ENCODE measurements at regions of chr9 and their contacts with region 1.

Region 1: GRCh38 chr9:123637945-123638634 is 282.1 kb downstream of the CRB2 start:
- DNase-seq: peak; percentile 75
- ATAC-seq: peak; percentile 89
- H3K4me3 ChIP-seq: no peak overlapping the region
- H3K27ac ChIP-seq: no peak overlapping the region
- H3K4me1 ChIP-seq: peaks cover 7% of the 10 kb centered on the region
- H3K27me3 ChIP-seq: no peaks in the 10 kb centered on the region
- CTCF ChIP-seq: no peak
- EP300 ChIP-seq: peak; percentile 65 to 79; a peak in 3 of 4 replicates
- POLR2A ChIP-seq: no peak
- RAD21 ChIP-seq: no peak

Region 2: GRCh38 chr9:123615381-123615780 is 22.7 kb before region 1 on chr9:
- CTCF ChIA-PET with region 1: interaction called, 5 read pairs
- POLR2A ChIA-PET with region 1: interaction called, 7 read pairs
- RAD21 ChIA-PET with region 1: interaction called, 4 read pairs
- SMC1A ChIA-PET with region 1: interaction called, 26 read pairs
- in situ Hi-C with region 1: no loop called
- intact Hi-C with region 1: no loop called
- DNase-seq: no peak
- ATAC-seq: peak; percentile 53
- H3K4me3 ChIP-seq: no peak overlapping the region
- H3K27ac ChIP-seq: no peak overlapping the region
- H3K4me1 ChIP-seq: 0 out of 2 replicates have a peak, but pooled peaks cover 7% of the 10 kb centered on the region
- H3K27me3 ChIP-seq: no peaks in the 10 kb centered on the region
- CTCF ChIP-seq: peak in 1 of 3 experiments; percentile 14; a peak in 1 of 6 replicates
- EP300 ChIP-seq: no peak
- POLR2A ChIP-seq: no peak
- RAD21 ChIP-seq: no peak

Region 3: GRCh38 chr9:123660691-123661466 is 22.8 kb after region 1 on chr9:
- CTCF ChIA-PET with region 1: interaction called, 3 read pairs
- POLR2A ChIA-PET with region 1: no interaction called
- RAD21 ChIA-PET with region 1: interaction called, 15 read pairs
- SMC1A ChIA-PET with region 1: interaction called, 19 read pairs
- in situ Hi-C with region 1: no loop called
- intact Hi-C with region 1: no loop called
- DNase-seq: no peak
- ATAC-seq: peak; percentile 60
- H3K4me3 ChIP-seq: no peak overlapping the region
- H3K27ac ChIP-seq: no peak overlapping the region
- H3K4me1 ChIP-seq: no peaks in the 10 kb centered on the region
- H3K27me3 ChIP-seq: no peaks in the 10 kb centered on the region
- CTCF ChIP-seq: no peak
- EP300 ChIP-seq: no peak
- POLR2A ChIP-seq: no peak
- RAD21 ChIP-seq: no peak

Region 4: GRCh38 chr9:123686131-123686828 is 48.2 kb after region 1 on chr9:
- CTCF ChIA-PET with region 1: interaction called, 3 read pairs
- POLR2A ChIA-PET with region 1: interaction called, 3 read pairs
- RAD21 ChIA-PET with region 1: interaction called, 22 read pairs
- SMC1A ChIA-PET with region 1: interaction called, 16 read pairs
- in situ Hi-C with region 1: no loop called
- intact Hi-C with region 1: no loop called
- DNase-seq: no peak
- ATAC-seq: peak; percentile 8; the same call in 1 of the 3 replicates
- H3K4me3 ChIP-seq: no peak overlapping the region
- H3K27ac ChIP-seq: no peak overlapping the region
- H3K4me1 ChIP-seq: peaks cover 33% of the 10 kb centered on the region
- H3K27me3 ChIP-seq: no peaks in the 10 kb centered on the region
- CTCF ChIP-seq: no peak
- EP300 ChIP-seq: no peak
- POLR2A ChIP-seq: no peak
- RAD21 ChIP-seq: no peak

Region 5: DNA sequence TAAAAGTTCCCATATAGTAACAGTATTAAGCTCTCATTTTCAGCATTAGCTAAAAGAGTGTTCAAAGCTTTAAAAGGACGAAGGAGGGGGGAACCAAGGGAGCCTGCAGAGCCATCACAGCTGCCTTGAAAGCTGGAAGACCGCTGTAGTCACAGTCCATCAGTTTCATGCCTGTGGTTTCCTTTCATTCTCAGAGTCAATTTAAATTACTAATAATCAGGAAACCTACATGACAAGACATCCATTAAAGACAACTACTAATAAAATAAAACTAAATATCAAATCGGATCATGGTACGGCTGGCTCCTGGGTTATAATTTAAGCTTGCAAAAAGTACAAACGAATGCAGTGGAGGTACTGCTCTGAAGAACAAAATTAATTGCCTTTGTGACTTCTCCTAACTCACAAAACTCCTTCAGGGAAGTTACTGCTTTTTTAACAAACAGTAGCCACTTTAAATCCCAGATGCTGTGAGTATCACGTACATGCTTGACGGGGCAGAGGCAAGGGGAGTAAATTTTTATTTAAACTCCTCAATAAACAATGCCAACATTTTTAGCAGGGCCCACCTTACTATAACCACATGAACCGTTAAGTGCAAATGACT is 78.4 kb after region 1 on chr9:
- CTCF ChIA-PET with region 1: interaction called, 5 read pairs
- POLR2A ChIA-PET with region 1: interaction called, 5 read pairs
- RAD21 ChIA-PET with region 1: interaction called, 8 read pairs
- SMC1A ChIA-PET with region 1: interaction called, 13 read pairs
- in situ Hi-C with region 1: no loop called
- intact Hi-C with region 1: no loop called
- DNase-seq: peak; percentile 43
- ATAC-seq: peak; percentile 89
- H3K4me3 ChIP-seq: no peak overlapping the region
- H3K27ac ChIP-seq: no peak overlapping the region
- H3K4me1 ChIP-seq: peaks cover 22% of the 10 kb centered on the region
- H3K27me3 ChIP-seq: no peaks in the 10 kb centered on the region
- CTCF ChIP-seq: no peak
- EP300 ChIP-seq: no peak
- POLR2A ChIP-seq: no peak
- RAD21 ChIP-seq: no peak

Region 6: GRCh38 chr9:123997665-123998277 is 359.7 kb after region 1 on chr9:
- CTCF ChIA-PET with region 1: no interaction called
- POLR2A ChIA-PET with region 1: no interaction called
- RAD21 ChIA-PET with region 1: interaction called, 6 read pairs
- SMC1A ChIA-PET with region 1: no interaction called
- in situ Hi-C with region 1: no loop called
- intact Hi-C with region 1: loop called (anchors 5 kb)
- DNase-seq: peak; percentile 81
- ATAC-seq: peak; percentile 79
- H3K4me3 ChIP-seq: peak overlapping the region; percentile 50; the same call in 1 of the 2 replicates
- H3K27ac ChIP-seq: peak overlapping the region; percentile 85
- H3K4me1 ChIP-seq: peaks cover 30% of the 10 kb centered on the region
- H3K27me3 ChIP-seq: peaks cover 0 to 25% of the 10 kb centered on the region in 2 experiments; a peak in 1 of 4 replicates
- CTCF ChIP-seq: no peak
- EP300 ChIP-seq: peak; percentile 24 to 61; a peak in 1 of 4 replicates
- POLR2A ChIP-seq: no peak
- RAD21 ChIP-seq: no peak

Measured in GM12878 (cell line).